Posterior vena cava (tissue), 2 donors: ENCODE measurements at regions of chr6 and their contacts with region 1.

Region 1: DNA sequence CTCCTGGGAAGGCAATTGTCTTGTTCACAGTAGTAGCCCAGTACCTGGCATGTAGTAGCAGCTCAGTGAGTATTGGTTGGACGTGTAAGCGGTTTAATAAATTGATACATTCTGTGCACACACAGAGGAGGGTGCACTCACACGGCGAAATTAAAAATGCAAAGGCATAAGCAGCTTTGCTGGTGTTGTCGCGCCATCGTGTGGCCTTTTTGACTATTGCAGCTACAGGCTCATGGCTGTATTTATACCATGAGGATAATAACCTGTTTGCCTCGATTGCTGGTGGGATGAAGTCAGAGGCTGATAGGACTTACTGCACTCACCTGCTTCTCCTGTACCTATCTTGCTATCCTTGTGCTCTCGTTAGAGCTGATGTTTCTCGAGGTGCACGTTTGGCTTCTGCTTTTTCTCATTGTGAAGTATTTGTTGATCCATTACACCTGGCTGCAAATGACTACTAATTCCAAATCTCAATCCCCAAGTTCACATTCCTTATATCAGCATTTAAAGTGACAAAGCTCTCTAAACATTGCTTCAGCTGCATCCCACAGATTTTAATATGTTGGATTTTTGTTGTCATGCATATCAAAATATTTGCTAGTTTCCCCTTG is 61.5 kb downstream of the TBXT start:
- DNase-seq: no peak

Region 2: DNA sequence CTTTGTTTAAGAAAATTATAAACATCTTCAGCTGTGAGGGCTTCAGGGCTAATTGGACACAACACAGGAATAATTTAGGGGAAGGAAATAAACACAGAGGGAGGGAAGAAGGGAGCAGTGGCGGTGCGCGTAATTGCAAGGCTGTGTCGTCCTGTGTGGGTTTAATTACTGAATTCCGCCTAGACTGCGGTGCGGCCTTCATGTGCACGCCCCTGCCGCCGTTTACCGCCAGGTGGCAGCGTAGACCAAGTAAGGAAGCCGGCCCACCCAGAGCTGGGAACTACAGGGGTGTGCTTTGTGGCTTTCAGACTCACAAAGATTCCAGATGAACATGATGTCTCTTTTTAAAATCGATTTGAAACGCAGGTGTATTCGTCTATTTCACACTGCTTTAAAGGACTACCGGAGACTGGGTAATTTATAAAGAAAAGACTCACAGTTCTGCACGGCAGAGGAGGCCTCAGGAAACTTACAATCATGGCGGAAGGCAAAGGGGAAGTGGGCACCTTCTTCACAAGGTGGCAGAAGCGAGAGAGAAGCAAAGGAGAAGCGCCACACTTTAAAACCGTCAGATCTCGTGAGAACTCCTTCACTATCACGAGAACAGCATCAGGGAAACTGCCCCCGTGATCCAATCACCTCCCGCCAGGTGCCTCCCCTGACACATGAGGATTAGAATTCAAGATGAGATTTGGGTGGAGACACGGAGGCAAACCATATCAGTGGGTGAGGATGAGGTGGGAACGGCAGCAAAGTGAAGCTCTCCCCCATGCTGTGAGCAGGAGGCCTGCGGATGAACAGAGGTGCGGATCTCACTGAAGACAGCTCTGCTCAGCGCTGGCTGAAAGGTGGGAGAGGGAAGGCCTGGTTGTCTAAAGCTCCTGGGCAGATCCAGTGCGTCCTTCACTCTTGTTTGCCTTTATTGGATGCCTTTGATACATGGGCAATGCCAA is 221.1 kb before region 1 on chr6:
- intact Hi-C with region 1: loop called in 1 of 2 experiments (anchors 5 kb)
- DNase-seq: peak; percentile 90

Region 3: GRCh38 chr6:166078294-166078693 is 27.9 kb before region 1 on chr6:
- intact Hi-C with region 1: loop called in 1 of 2 experiments (anchors 1 kb)
- DNase-seq: no peak